ENCODE measurements at regions of chr4 and their contacts with region 1.

Region 1: GRCh38 chr4:98482847-98483806 is 175.3 kb downstream of the TSPAN5 start:
- DNase-seq: peak; percentile 69
- H3K4me3 Mint-ChIP-seq: peak overlapping the region; percentile 47
- H3K27ac Mint-ChIP-seq: peak overlapping the region; percentile 96
- H3K4me1 Mint-ChIP-seq: peaks cover 74% of the 10 kb centered on the region
- H3K27me3 Mint-ChIP-seq: no peaks in the 10 kb centered on the region

Region 2: GRCh38 chr4:98467627-98468072 is 15.5 kb before region 1 on chr4:
- CTCF ChIA-PET with region 1: interaction called, 21 read pairs
- POLR2A ChIA-PET with region 1: interaction called, 3 read pairs
- intact Hi-C with region 1: no loop called
- DNase-seq: peak; percentile 82
- H3K4me3 Mint-ChIP-seq: peak overlapping the region; percentile 67
- H3K27ac Mint-ChIP-seq: no peak overlapping the region
- H3K4me1 Mint-ChIP-seq: peaks cover 27% of the 10 kb centered on the region
- H3K27me3 Mint-ChIP-seq: no peaks in the 10 kb centered on the region

Region 3: GRCh38 chr4:98510757-98511517 is 27.8 kb after region 1 on chr4:
- CTCF ChIA-PET with region 1: interaction called, 3 read pairs
- POLR2A ChIA-PET with region 1: no interaction called
- intact Hi-C with region 1: loop called (anchors 1 kb)
- DNase-seq: peak; percentile 69
- H3K4me3 Mint-ChIP-seq: no peak overlapping the region
- H3K27ac Mint-ChIP-seq: peak overlapping the region; percentile 24
- H3K4me1 Mint-ChIP-seq: peaks cover 55% of the 10 kb centered on the region
- H3K27me3 Mint-ChIP-seq: no peaks in the 10 kb centered on the region

Region 4: DNA sequence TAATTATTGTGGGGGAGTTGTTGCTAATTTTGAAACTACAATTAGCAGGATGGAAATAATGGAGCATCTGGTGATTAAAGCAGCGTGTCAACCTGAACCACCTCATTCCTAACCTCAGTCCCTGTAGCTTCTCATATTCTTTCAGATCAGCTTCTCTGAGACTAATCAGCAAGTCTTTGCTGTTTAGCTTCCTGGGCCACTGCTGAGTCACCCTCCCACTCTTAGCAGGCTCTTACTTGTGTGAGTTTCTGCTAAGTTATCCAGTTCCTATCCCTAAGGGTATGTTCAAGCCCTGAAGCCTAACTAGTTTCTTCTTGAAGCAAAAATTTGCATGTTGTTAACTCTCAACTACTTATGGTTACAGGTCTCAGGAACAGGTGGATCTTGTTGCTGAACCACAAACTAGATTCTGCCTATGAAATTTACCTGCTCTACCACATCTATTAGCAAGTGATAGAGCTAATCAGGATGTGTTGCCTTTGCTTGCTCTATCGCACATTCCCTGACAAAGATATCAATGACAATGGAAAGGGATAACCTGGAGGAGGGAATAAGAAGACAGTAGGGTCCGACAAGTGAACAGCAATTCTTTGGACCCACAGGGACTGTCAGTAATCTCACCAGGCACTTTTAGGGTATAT is 311.6 kb after region 1 on chr4:
- CTCF ChIA-PET with region 1: no interaction called
- POLR2A ChIA-PET with region 1: no interaction called
- intact Hi-C with region 1: loop called (anchors 5 kb)
- DNase-seq: peak; percentile 73
- H3K4me3 Mint-ChIP-seq: no peak overlapping the region
- H3K27ac Mint-ChIP-seq: no peak overlapping the region
- H3K4me1 Mint-ChIP-seq: peaks cover 18% of the 10 kb centered on the region
- H3K27me3 Mint-ChIP-seq: no peaks in the 10 kb centered on the region

Region 5: DNA sequence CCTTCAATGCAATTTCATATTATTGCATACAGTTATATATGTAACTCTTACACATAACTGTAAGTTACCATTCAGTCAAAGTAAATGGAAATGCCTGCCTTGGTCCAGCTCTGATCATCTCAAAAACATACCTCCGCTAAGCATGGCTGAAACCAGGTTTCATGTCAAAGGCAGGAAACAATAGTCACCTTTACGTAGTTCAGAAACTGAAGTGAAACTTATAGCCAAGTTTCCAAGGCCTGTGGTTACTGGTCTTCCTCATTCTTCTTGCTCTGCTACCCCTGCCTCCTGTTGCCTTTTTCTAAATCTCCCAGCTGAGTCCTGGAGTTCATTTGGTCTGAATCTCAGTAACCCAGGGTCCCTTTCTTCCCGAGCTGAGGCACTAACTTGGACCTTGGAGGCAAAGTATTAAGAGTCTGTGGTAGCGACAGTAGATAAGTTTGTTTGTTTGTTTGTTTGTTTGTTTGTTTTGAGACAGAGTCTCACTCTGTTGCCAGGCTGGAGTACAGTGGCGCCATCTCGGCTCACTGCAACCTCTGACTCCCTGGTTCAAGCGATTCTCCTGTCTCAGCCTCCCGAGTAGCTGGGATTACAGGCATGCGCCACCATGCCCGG is 1364.3 kb after region 1 on chr4:
- CTCF ChIA-PET with region 1: no interaction called
- POLR2A ChIA-PET with region 1: no interaction called
- intact Hi-C with region 1: loop called (anchors 10 kb)
- DNase-seq: peak; percentile 47
- H3K4me3 Mint-ChIP-seq: peak overlapping the region; percentile 59
- H3K27ac Mint-ChIP-seq: peak overlapping the region; percentile 95
- H3K4me1 Mint-ChIP-seq: peaks cover 74% of the 10 kb centered on the region
- H3K27me3 Mint-ChIP-seq: no peaks in the 10 kb centered on the region

Measured in activated CD4-positive, alpha-beta memory T cell treated with anti-CD3 and anti-CD28 coated beads for 36 hours (primary cell).